Dendritic cell treated with granulocyte-macrophage colony-stimulating factor and Interleukin-4, amounts not matched to agents 40 ng/mL and 50 ng/mL, for 4 days (primary cell): ENCODE measurements at regions of chr11 and their contacts with region 1.

Region 1: GRCh38 chr11:82523141-82523540 is 210.5 kb downstream of the FAM181B start:
- H3K4me3 Mint-ChIP-seq: no peak overlapping the region
- H3K27ac Mint-ChIP-seq: no peak overlapping the region
- H3K4me1 Mint-ChIP-seq: peaks cover 29% of the 10 kb centered on the region
- H3K27me3 Mint-ChIP-seq: peaks cover 4% of the 10 kb centered on the region

Region 2: GRCh38 chr11:81644239-81644840 is 878.8 kb before region 1 on chr11:
- intact Hi-C with region 1: loop called (anchors 10 kb)
- H3K4me3 Mint-ChIP-seq: no peak overlapping the region
- H3K27ac Mint-ChIP-seq: no peak overlapping the region
- H3K4me1 Mint-ChIP-seq: no peaks in the 10 kb centered on the region
- H3K27me3 Mint-ChIP-seq: peaks cover 7% of the 10 kb centered on the region

Region 3: DNA sequence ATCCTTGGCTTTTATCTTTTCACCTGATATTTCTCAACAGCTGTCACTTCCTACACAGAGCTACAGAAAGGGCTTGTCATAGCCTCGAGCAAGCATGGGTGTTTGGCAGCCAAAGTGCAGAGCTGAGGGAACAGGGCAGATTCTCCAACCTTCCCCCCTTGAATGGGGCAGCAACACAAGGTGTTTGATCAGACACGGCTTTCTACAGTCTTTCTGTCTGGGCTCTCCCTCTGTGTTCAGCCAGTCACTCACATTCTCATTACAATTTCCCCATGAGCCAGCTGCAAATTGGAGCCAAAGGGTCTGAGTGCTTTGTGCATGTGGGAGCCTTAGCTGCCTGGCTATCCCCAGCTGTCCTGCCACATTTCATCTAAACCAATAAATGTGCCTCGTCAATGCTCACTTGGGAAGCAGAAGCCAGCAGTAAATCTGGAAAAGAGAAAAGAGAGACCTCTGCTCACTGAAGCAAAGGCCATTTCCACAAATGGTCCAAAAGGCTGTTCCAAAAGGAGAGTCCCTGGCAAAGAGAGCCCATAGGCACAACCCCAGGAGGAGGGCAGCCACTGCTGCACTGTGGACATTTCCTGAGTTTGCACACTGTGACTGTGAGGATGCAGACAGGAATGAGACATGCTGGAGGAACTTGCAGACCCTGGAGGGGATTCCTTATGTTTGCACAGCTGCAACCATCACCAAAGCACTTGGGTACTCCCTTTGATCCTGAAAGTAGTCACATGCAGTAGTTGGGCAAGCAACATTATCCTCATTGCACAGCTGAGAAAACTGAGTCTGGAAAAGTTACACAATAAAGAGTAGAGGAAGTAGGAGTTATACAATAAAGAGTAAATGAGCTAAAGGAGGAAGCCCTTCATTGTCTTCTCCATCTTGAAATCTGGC is 23.8 kb after region 1 on chr11:
- intact Hi-C with region 1: no loop called
- H3K4me3 Mint-ChIP-seq: no peak overlapping the region
- H3K27ac Mint-ChIP-seq: no peak overlapping the region
- H3K4me1 Mint-ChIP-seq: peaks cover 18% of the 10 kb centered on the region
- H3K27me3 Mint-ChIP-seq: peaks cover 4% of the 10 kb centered on the region

Region 4: GRCh38 chr11:82557274-82557673 is 34.1 kb after region 1 on chr11:
- intact Hi-C with region 1: loop called (anchors 5 kb)
- H3K4me3 Mint-ChIP-seq: no peak overlapping the region
- H3K27ac Mint-ChIP-seq: no peak overlapping the region
- H3K4me1 Mint-ChIP-seq: peaks cover 43% of the 10 kb centered on the region
- H3K27me3 Mint-ChIP-seq: peaks cover 4% of the 10 kb centered on the region